Heart left ventricle (tissue), 16 donors: ENCODE measurements at regions of chr2 and their contacts with region 1.

Region 1: DNA sequence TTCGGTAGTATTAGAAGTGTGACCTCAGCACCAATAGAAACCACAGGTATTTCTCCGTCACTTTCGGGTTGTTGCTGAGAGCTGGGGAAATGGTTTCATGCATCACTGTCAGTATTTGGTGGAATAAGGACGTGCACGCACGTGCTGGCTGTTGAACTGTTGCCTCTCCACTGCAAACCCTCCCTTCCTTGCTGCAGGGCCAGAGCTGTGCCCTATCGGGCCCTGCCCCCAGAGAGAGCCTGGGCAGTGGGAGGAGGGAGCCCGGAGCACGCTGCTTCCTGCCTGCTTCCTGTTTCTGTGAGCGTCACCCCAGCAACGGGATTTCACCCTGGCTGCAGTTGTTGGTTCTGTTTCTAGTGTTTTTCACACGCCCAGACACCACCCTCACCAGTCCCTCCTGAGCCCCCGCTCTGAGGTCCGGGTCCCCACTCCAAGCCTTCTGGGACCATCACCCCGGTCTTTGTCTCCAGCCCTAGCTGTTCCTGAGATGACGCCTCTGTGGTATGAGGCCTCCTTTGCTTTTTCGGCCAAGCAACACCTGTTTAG is 47.4 kb downstream of the LRRFIP1 start:
- DNase-seq: peak; percentile 89 to 92 (median 91)
- ATAC-seq: peak; percentile 79 to 90 (median 84)
- H3K4me3 ChIP-seq: peak overlapping the region in 9 of 12 donors; percentile 4 to 44 (median 24)
- H3K27ac ChIP-seq: peak overlapping the region; percentile 24 to 90 (median 78)
- H3K4me1 ChIP-seq: peaks cover 28 to 91% (median 77%) of the 10 kb centered on the region in 12 donors
- H3K27me3 ChIP-seq: no peaks in the 10 kb centered on the region
- CTCF ChIP-seq: peak in 6 of 12 donors; percentile 6 to 21 (median 10)
- POLR2A ChIP-seq: peak in 1 of 2 donors; percentile 39

Region 2: DNA sequence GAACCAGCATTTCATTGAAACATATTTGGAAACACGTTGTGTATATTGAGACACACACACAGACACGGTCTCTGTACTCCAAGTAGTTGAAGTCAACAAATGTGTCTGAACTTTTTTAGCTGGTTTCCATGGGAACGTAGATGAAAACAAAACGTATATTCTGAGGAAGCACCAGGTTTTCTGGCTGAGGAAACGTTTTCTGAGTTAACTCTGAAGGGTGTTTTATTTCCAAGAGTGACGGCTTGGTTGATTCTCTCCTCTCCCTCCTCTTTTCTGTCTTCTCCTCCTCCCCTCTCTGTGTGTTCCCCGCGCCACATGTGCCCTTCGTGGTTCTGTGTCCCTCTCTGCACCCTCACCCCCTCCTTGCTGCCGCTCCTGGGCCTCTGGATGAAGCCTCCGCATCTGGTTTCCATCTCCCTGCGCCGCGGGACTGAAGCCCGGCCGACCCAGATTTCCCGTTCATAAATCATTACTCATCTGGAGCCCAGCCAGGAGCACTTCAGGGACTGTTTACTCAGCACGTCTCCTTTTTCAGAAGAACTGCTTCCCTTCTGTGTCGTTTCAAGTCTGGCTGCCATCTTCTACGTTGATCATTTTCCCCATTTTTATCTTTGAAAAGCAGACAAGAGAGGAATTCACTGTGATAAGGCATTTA is 383.5 kb before region 1 on chr2:
- intact Hi-C with region 1: no loop called
- DNase-seq: peak; percentile 93 to 99 (median 97)
- ATAC-seq: peak; percentile 95 to 97 (median 97)
- H3K4me3 ChIP-seq: peak overlapping the region in 5 of 12 donors; percentile 3 to 27 (median 11)
- H3K27ac ChIP-seq: peak overlapping the region; percentile 74 to 92 (median 84)
- H3K4me1 ChIP-seq: peaks cover 0 to 41% (median 27%) of the 10 kb centered on the region in 12 donors
- H3K27me3 ChIP-seq: no peaks in the 10 kb centered on the region
- CTCF ChIP-seq: no peak
- POLR2A ChIP-seq: peak in 1 of 2 donors; percentile 6

Region 3: GRCh38 chr2:237571551-237571950 is 103.3 kb before region 1 on chr2:
- intact Hi-C with region 1: no loop called
- DNase-seq: peak in 1 of 5 donors; percentile 15
- ATAC-seq: peak in 1 of 4 donors; percentile 3
- H3K4me3 ChIP-seq: no peak overlapping the region
- H3K27ac ChIP-seq: no peak overlapping the region
- H3K4me1 ChIP-seq: peaks cover 0 to 29% (median 12%) of the 10 kb centered on the region in 12 donors
- H3K27me3 ChIP-seq: no peaks in the 10 kb centered on the region
- CTCF ChIP-seq: no peak
- POLR2A ChIP-seq: no peak

Region 4: DNA sequence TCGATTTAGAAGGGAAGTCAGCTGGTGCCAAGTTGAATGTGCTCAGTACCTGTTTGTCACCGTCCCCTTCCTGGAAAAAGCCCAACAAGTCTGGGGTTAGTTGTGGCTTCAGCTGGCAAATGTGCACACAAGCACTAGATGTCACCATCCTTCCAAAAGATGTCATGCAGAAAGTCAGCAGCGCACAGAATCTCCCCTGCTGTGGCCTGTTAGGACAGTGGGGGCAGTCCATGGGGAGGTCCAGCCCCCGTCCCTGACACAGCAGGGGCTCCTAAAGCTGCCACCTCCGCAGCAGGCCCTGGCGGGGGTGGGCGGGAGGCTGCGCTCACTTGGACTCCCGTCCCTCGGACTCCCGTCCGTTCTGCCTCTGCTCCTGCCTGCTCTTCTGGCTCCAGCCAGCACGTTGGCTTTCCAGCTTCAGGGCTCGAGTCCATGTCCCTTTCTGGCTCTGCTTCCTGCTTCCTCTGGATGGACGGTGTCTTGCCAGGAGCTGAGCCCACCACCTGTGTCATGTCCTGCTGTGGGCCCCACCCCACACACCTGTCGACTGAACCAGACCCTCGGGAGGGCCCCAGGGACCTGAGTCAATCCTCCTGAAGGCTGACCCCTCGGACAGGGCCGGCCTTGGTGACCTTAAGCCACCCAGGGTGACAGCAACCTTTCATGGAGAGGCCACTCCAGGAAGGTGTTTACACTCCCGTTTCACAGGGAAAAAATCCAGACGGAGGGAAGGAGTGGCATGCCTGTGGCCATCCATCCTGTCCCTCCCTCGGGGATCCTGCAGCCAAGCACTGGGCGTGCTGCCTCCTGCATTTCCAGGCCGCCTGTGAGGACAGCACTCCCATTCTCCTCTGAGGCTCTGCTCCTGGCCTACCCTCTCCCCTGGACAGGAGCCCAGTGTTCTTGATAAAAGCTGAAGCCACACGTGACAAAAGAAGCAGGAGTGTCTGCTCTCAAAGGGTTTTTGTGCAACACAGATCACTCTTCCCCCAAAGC is 92.8 kb before region 1 on chr2:
- intact Hi-C with region 1: loop called in 2 of 10 experiments (anchors 5 kb)
- DNase-seq: peak; percentile 82 to 92 (median 83)
- ATAC-seq: peak; percentile 89 to 94 (median 92)
- H3K4me3 ChIP-seq: peak overlapping the region in 5 of 12 donors; percentile 10 to 40 (median 29)
- H3K27ac ChIP-seq: peak overlapping the region; percentile 19 to 89 (median 84)
- H3K4me1 ChIP-seq: peaks cover 0 to 27% (median 17%) of the 10 kb centered on the region in 12 donors
- H3K27me3 ChIP-seq: no peaks in the 10 kb centered on the region
- CTCF ChIP-seq: peak; percentile 19 to 83 (median 62)
- POLR2A ChIP-seq: no peak

Region 5: GRCh38 chr2:237603718-237604362 is 71.0 kb before region 1 on chr2:
- intact Hi-C with region 1: loop called in 3 of 10 experiments (anchors 5 kb)
- DNase-seq: peak in 2 of 5 donors; percentile 54 to 63
- ATAC-seq: peak in 3 of 4 donors; percentile 21 to 70 (median 56)
- H3K4me3 ChIP-seq: peak overlapping the region in 3 of 12 donors; percentile 8 to 15 (median 12)
- H3K27ac ChIP-seq: peak overlapping the region in 7 of 12 donors; percentile 17 to 57 (median 30)
- H3K4me1 ChIP-seq: peaks cover 0 to 41% (median 28%) of the 10 kb centered on the region in 12 donors
- H3K27me3 ChIP-seq: no peaks in the 10 kb centered on the region
- CTCF ChIP-seq: no peak
- POLR2A ChIP-seq: no peak

Region 6: GRCh38 chr2:237691908-237692600 is 17.2 kb after region 1 on chr2:
- intact Hi-C with region 1: loop called in 1 of 10 experiments (anchors 2 kb)
- DNase-seq: peak; percentile 96 to 99 (median 97)
- ATAC-seq: peak; percentile 53 to 84 (median 74)
- H3K4me3 ChIP-seq: peak overlapping the region; percentile 60 to 98 (median 86)
- H3K27ac ChIP-seq: peak overlapping the region; percentile 80 to 98 (median 92)
- H3K4me1 ChIP-seq: peaks cover 13 to 91% (median 78%) of the 10 kb centered on the region in 12 donors
- H3K27me3 ChIP-seq: no peaks in the 10 kb centered on the region
- CTCF ChIP-seq: peak in 2 of 12 donors; percentile 10 to 11
- POLR2A ChIP-seq: peak in 1 of 2 donors; percentile 54

Region 7: DNA sequence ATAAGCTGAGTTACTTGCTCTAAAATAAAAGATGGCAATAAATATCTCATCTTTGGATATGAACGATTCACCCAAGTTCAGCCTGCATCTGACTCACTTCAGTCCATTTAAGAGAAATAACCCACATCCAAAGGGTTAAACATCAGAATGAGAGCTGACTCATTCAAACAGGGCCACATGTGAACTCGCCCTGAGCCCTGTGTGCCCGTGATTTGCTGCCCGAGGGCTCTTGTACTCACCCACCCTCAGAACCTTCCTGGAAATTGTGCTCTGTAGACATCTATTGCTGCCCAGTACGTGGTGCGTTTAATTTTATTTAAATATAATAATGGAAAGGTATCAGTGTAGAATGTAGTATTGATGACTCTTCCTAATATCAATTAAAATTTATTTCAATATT is 56.9 kb after region 1 on chr2:
- intact Hi-C with region 1: loop called in 1 of 10 experiments (anchors 2 kb)
- DNase-seq: no peak
- ATAC-seq: peak in 3 of 4 donors; percentile 23 to 49 (median 32)
- H3K4me3 ChIP-seq: peak overlapping the region in 2 of 12 donors; percentile 20 to 48
- H3K27ac ChIP-seq: peak overlapping the region in 11 of 12 donors; percentile 78 to 86 (median 84)
- H3K4me1 ChIP-seq: peaks cover 8 to 100% (median 82%) of the 10 kb centered on the region in 12 donors
- H3K27me3 ChIP-seq: no peaks in the 10 kb centered on the region
- CTCF ChIP-seq: no peak
- POLR2A ChIP-seq: no peak